Aorta (tissue), 5 donors: ENCODE measurements at regions of chr2 and their contacts with region 1.

Region 1: DNA sequence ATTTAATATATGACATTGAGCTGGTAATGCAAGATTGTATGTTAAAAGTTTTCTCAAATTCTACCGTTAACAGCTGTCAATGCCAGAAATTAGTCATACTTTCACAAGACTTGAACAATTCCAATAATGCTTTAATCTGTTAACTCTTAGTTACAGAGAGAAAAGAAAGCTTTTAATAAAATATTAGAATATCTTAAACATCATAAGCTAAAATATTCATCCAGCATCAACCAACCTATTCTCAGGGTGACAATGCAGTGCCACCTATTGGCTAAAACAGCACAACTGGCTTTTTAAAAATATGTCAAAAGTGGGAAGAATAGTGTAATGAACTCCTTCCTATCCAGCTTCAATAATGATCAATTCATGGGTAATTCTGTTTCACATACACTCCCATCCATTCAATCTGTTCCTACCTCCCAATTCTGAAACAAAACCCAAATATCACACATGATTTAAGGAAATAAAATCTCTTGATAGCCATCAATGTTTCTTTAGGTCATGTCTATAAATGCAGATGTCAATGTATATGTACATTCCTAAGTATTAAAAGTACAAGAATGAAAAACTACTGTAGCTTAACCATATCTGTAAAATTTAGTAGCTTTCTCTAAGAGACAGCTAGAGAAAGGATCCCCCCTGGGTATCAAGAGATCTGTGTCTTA is 79.8 kb upstream of the CCDC141 start:
- DNase-seq: no peak
- ATAC-seq: no peak
- H3K4me3 ChIP-seq: no peak overlapping the region
- H3K27ac ChIP-seq: no peak overlapping the region
- H3K4me1 ChIP-seq: no peaks in the 10 kb centered on the region
- H3K27me3 ChIP-seq: no peaks in the 10 kb centered on the region

Region 2: GRCh38 chr2:178914259-178914849 is 215.4 kb before region 1 on chr2:
- intact Hi-C with region 1: loop called in 1 of 2 experiments (anchors 10 kb)
- DNase-seq: peak; percentile 88 to 93
- ATAC-seq: peak; percentile 91
- H3K4me3 ChIP-seq: no peak overlapping the region
- H3K27ac ChIP-seq: no peak overlapping the region
- H3K4me1 ChIP-seq: peaks cover 1 to 4% of the 10 kb centered on the region in 2 donors
- H3K27me3 ChIP-seq: no peaks in the 10 kb centered on the region

Region 3: DNA sequence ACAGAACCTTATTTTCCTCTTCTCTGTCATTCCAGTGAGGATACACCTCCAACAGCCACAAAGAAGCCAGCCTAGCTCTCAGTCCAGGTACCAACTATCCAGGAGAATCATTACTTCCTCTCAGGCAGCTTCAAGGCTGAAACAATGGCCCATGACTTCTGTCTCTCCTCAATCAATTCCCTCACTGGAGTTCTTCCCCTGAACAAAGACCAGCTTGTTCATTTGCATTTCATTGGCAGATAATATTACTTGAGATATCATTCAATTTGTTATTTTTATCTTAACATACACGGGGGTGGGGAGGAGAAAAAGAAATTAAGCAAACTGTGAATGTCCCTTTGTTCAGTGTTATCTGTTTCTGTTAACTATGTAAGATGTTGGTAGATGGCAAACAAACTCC is 123.7 kb before region 1 on chr2:
- intact Hi-C with region 1: no loop called
- DNase-seq: no peak
- ATAC-seq: no peak
- H3K4me3 ChIP-seq: no peak overlapping the region
- H3K27ac ChIP-seq: no peak overlapping the region
- H3K4me1 ChIP-seq: no peaks in the 10 kb centered on the region
- H3K27me3 ChIP-seq: no peaks in the 10 kb centered on the region